ENCODE measurements at regions of chr19 and their contacts with region 1.

Region 1: DNA sequence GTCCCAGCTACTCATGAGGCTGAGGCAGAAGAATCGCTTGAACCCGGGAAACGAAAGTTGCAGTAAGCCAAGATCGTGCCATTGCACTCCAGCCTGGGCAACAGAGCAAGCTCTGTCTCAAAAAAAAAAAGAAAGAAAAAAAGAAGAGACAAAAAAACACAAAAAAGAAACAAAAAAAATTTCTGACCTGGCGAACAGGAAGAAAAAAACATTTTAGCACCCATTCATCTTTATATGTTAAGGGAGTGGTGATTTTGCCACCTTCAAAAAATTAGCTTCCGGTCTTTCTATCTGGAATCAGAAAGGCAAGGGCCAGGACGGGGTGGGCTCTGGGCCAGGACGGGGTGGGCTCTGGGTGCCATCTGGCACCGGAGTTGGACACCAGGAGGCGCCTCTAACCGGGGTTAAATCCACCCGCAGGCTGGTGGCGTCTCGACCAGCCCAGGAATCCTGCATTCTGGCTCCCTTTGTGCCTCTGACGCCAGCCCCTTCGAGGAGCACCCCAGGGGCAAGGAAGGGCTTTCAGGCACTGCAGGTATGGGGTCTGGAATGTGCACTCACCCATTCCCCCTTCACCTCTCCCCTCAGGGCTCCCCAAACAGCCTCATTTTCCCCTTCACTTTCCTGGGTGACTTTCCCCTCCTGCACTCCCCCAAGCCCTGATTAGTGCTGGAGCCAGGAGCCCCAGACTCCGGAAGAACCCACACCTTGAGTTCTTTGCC is 10.4 kb upstream of the ZSWIM4 start:
- DNase-seq: peak; percentile 87

Region 2: GRCh38 chr19:13833330-13834243 is 48.7 kb after region 1 on chr19:
- intact Hi-C with region 1: loop called (anchors 5 kb)
- DNase-seq: peak; percentile 97

Measured in cardiac septum (tissue), 1 donor.